HepG2 (cell line): ENCODE measurements at regions of chr7 and their contacts with region 1.

Region 1: DNA sequence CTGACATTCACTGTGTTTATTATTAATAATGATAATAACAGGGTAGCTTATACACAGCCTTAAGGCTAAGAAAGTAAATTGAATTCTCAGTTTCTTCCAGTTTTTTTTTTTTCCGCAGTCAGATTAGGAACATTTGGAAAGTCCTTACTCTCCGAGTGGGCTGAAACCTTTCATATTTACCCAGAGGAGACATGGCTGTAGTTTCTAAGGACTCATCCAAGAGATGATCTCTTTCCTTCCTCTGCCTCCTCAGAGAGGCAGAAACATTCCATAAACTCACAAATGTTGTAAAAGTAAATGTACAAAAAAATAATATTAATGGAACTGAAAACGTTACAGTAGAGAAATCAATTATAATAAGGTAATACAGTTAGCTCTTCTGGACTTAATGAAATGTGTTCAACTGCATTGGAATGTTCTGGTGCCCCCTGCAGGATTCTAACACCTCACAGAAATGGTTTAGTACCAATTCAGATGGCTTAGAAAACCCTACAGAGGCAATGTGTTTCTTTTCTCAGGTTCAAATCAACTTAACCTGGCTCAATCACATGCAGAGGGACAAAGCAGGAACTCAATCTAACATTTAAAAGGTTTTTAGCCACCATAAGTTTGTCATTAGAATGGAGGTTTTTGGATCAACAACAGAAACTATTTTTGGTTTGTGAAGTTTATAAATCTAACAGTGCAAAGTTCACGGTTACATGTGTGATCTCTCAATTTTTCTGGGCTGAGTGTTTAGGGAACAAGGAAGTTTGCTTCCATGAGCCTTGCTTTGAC is 71.7 kb downstream of the ICA1 start:
- DNase-seq: peak; percentile 44
- ATAC-seq: peak; percentile 85
- H3K4me3 ChIP-seq: no peak overlapping the region
- H3K27ac ChIP-seq: no peak overlapping the region
- H3K4me1 ChIP-seq: no peaks in the 10 kb centered on the region; the same call in 1 of the 2 replicates
- H3K27me3 ChIP-seq: no peaks in the 10 kb centered on the region
- CTCF ChIP-seq: peak; percentile 73
- EP300 ChIP-seq: no peak
- POLR2A ChIP-seq: no peak
- RAD21 ChIP-seq: no peak

Region 2: DNA sequence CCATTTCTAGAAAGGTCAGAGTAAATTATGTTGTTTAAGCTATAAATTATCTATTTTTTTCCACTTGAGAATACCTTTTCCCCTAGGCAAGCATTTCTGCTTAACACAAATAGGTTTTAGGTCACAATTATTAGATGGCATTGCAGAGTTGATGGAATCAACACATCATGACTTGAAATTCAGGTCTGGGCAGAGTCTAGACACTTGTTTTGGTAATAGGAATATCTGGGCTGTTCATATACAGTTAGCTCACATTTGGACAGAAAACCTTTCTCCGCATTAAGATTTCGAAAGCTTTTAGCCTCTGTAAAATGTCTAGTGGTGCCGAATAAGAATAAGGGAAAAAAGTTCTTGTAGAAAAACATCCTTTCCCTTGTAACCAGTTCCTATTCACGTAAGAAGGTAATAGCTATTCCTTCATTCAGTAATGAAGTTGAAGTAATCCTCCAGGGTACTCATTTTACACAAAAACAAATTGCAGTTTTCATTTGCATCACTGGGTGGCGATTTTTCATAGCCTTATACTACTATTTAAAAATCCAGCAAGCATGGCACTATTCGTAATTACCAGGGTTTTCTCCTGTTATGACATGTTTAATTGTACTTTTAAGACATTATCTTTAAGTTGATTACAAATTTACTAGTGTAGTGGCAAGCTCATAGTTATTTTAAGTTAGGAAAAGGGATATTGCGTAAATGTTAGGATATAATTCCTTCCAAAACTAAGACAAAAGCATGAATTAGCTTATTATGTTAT is 508.9 kb before region 1 on chr7:
- CTCF ChIA-PET with region 1: no interaction called
- POLR2A ChIA-PET with region 1: no interaction called
- in situ Hi-C with region 1: no loop called
- intact Hi-C with region 1: loop called (anchors 1 kb)
- DNase-seq: peak; percentile 50
- ATAC-seq: peak; percentile 66
- H3K4me3 ChIP-seq: no peak overlapping the region
- H3K27ac ChIP-seq: no peak overlapping the region
- H3K4me1 ChIP-seq: no peaks in the 10 kb centered on the region
- H3K27me3 ChIP-seq: no peaks in the 10 kb centered on the region
- CTCF ChIP-seq: peak; percentile 64
- EP300 ChIP-seq: no peak
- POLR2A ChIP-seq: no peak
- RAD21 ChIP-seq: 0 out of 2 replicates have a peak, but pooled peaks have one; percentile 35

Region 3: GRCh38 chr7:8232999-8233847 is 42.9 kb after region 1 on chr7:
- CTCF ChIA-PET with region 1: no interaction called
- POLR2A ChIA-PET with region 1: no interaction called
- in situ Hi-C with region 1: no loop called
- intact Hi-C with region 1: no loop called
- DNase-seq: no peak
- ATAC-seq: no peak
- H3K4me3 ChIP-seq: no peak overlapping the region
- H3K27ac ChIP-seq: no peak overlapping the region
- H3K4me1 ChIP-seq: no peaks in the 10 kb centered on the region
- H3K27me3 ChIP-seq: no peaks in the 10 kb centered on the region
- CTCF ChIP-seq: no peak
- EP300 ChIP-seq: no peak
- POLR2A ChIP-seq: no peak
- RAD21 ChIP-seq: no peak